Right ventricle myocardium inferior (tissue), 1 donor: ENCODE measurements at regions of chr5 and their contacts with region 1.

Region 1: GRCh38 chr5:38556599-38557305 is at the start of gene LIFR:
- DNase-seq: peak; percentile 91
- ATAC-seq: peak; percentile 88
- total RNA-seq, gene LIFR: 56.1 TPM

Region 2: DNA sequence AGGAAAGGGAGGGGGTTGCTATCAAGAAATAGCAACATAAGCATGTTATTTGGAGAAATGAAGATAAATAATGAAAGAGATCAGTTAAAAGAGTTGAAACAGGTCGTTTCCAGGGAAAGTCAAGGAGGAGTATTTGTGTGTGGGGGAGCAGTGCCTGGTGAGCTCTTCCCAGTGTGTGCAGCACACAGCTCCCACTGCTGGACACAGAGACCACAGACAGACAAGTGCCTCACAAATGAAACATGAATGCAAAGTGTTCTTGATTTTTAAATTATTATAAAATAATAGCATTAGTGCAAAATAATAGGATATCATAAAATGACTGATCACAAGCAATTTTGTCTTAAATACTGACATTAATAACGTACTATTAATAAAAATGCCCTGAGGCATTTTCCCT is 41.1 kb before region 1 on chr5:
- intact Hi-C with region 1: no loop called
- DNase-seq: no peak
- ATAC-seq: no peak

Region 3: DNA sequence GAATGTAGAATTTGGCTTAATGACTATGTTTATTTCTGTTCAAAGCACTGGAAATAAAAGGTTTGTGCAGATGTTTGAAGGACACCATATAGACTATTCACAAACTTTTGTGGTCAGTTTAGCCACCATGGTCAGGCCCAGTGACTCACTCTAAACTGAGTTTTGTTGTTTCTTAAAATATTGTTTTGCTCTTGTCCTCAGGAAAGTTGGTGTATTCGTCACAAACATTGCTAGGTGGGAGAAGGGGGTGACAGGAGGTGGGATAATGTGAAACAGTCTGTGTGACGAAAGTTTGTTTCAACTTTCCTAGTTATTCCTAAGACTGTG is 34.7 kb after region 1 on chr5:
- intact Hi-C with region 1: loop called (anchors 5 kb)
- DNase-seq: no peak
- ATAC-seq: no peak

Region 4: GRCh38 chr5:38666668-38667498 is 110.1 kb after region 1 on chr5:
- intact Hi-C with region 1: loop called (anchors 2 kb)
- DNase-seq: no peak
- ATAC-seq: peak; percentile 95

Region 5: DNA sequence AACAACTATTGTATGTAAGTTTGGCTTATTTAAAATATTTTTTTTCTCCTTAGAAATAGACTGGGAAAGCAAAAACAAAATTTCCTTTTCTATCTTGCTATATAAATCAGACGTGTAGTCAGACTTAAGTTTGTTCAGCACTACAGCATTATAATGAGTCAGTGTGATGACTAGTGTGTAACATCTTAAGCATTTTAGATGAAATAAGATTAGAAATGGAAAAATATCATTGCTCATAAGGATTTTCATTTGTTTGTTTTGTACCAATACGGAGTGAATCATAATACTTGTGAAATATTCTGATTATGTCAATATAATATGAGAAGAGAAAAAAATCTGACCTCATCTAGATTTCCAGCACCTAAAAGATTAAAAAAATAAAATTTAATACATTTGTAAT is 582.1 kb after region 1 on chr5:
- intact Hi-C with region 1: no loop called
- DNase-seq: no peak
- ATAC-seq: no peak